Activated B cell treated with CpG ODN at 0.5 μM for 24 hours (primary cell): ENCODE measurements at regions of chr3 and their contacts with region 1.

Region 1: GRCh38 chr3:108130701-108131474 is 40.1 kb upstream of the CD47 start:
- DNase-seq: no peak
- ATAC-seq: no peak
- H3K4me3 Mint-ChIP-seq: peak overlapping the region; percentile 74
- H3K27ac Mint-ChIP-seq: peak overlapping the region; percentile 92
- H3K4me1 Mint-ChIP-seq: peaks cover 96% of the 10 kb centered on the region
- H3K27me3 Mint-ChIP-seq: no peaks in the 10 kb centered on the region
- CTCF ChIP-seq: no peak

Region 2: GRCh38 chr3:107493134-107493533 is 637.8 kb before region 1 on chr3:
- CTCF ChIA-PET with region 1: no interaction called
- POLR2A ChIA-PET with region 1: no interaction called
- intact Hi-C with region 1: no loop called
- DNase-seq: no peak
- ATAC-seq: no peak
- H3K4me3 Mint-ChIP-seq: no peak overlapping the region
- H3K27ac Mint-ChIP-seq: no peak overlapping the region
- H3K4me1 Mint-ChIP-seq: no peaks in the 10 kb centered on the region
- H3K27me3 Mint-ChIP-seq: peaks cover 3% of the 10 kb centered on the region
- CTCF ChIP-seq: no peak

Region 3: GRCh38 chr3:107861904-107862303 is 269.0 kb before region 1 on chr3:
- CTCF ChIA-PET with region 1: no interaction called
- POLR2A ChIA-PET with region 1: interaction called, 3 read pairs
- intact Hi-C with region 1: loop called (anchors 5 kb)
- DNase-seq: peak; percentile 18
- ATAC-seq: peak; percentile 96
- H3K4me3 Mint-ChIP-seq: peak overlapping the region; percentile 60
- H3K27ac Mint-ChIP-seq: peak overlapping the region; percentile 73
- H3K4me1 Mint-ChIP-seq: peaks cover 16% of the 10 kb centered on the region
- H3K27me3 Mint-ChIP-seq: no peaks in the 10 kb centered on the region
- CTCF ChIP-seq: no peak

Region 4: GRCh38 chr3:107938143-107938542 is 192.7 kb before region 1 on chr3:
- CTCF ChIA-PET with region 1: no interaction called
- POLR2A ChIA-PET with region 1: no interaction called
- intact Hi-C with region 1: no loop called
- DNase-seq: no peak
- ATAC-seq: no peak
- H3K4me3 Mint-ChIP-seq: no peak overlapping the region
- H3K27ac Mint-ChIP-seq: no peak overlapping the region
- H3K4me1 Mint-ChIP-seq: no peaks in the 10 kb centered on the region
- H3K27me3 Mint-ChIP-seq: peaks cover 3% of the 10 kb centered on the region
- CTCF ChIP-seq: no peak

Region 5: DNA sequence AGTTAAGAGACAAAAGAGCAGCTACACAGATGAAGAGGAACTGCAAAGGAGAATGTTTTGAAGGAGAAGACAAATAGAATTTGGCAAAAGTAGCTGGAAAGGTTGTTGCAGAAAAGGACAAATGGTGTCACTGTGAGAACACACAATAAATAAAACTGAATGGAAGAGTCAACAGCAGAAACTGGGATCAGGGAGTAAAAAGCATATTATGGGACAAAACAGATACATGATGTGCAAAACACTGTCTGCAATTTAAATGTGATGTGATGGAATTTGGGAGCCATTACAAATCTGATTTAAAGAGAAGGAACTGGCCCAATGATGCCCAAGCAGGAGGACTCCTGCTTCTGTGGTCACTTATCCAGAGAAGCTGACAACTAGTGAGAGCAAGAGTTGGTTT is 86.2 kb before region 1 on chr3:
- CTCF ChIA-PET with region 1: no interaction called
- POLR2A ChIA-PET with region 1: no interaction called
- intact Hi-C with region 1: no loop called
- DNase-seq: no peak
- ATAC-seq: no peak
- H3K4me3 Mint-ChIP-seq: no peak overlapping the region
- H3K27ac Mint-ChIP-seq: peak overlapping the region; percentile 38
- H3K4me1 Mint-ChIP-seq: peaks cover 3% of the 10 kb centered on the region
- H3K27me3 Mint-ChIP-seq: no peaks in the 10 kb centered on the region
- CTCF ChIP-seq: no peak

Region 6: GRCh38 chr3:108062051-108062450 is 68.8 kb before region 1 on chr3:
- CTCF ChIA-PET with region 1: no interaction called
- POLR2A ChIA-PET with region 1: interaction called, 8 read pairs
- intact Hi-C with region 1: loop called (anchors 2 kb)
- DNase-seq: no peak
- ATAC-seq: peak; percentile 93
- H3K4me3 Mint-ChIP-seq: peak overlapping the region; percentile 11
- H3K27ac Mint-ChIP-seq: peak overlapping the region; percentile 66
- H3K4me1 Mint-ChIP-seq: peaks cover 81% of the 10 kb centered on the region
- H3K27me3 Mint-ChIP-seq: no peaks in the 10 kb centered on the region
- CTCF ChIP-seq: no peak

Region 7: GRCh38 chr3:108145578-108145977 is 14.7 kb after region 1 on chr3:
- CTCF ChIA-PET with region 1: no interaction called
- POLR2A ChIA-PET with region 1: interaction called, 4 read pairs
- intact Hi-C with region 1: loop called (anchors 1 kb)
- DNase-seq: no peak
- ATAC-seq: no peak
- H3K4me3 Mint-ChIP-seq: no peak overlapping the region
- H3K27ac Mint-ChIP-seq: no peak overlapping the region
- H3K4me1 Mint-ChIP-seq: peaks cover 21% of the 10 kb centered on the region
- H3K27me3 Mint-ChIP-seq: no peaks in the 10 kb centered on the region
- CTCF ChIP-seq: no peak